Ascending aorta (tissue), 2 donors: ENCODE measurements at regions of chr1 and their contacts with region 1.

Region 1: GRCh38 chr1:47515164-47515789 is 77.4 kb downstream of the FOXD2 start:
- DNase-seq: no peak
- H3K4me3 ChIP-seq: no peak overlapping the region
- H3K27ac ChIP-seq: peak overlapping the region in 1 of 2 donors; percentile 17
- H3K4me1 ChIP-seq: no peaks in the 10 kb centered on the region
- H3K27me3 ChIP-seq: no peaks in the 10 kb centered on the region
- CTCF ChIP-seq: no peak

Region 2: GRCh38 chr1:46903481-46903880 is 611.8 kb before region 1 on chr1:
- intact Hi-C with region 1: no loop called
- DNase-seq: no peak
- H3K4me3 ChIP-seq: no peak overlapping the region
- H3K27ac ChIP-seq: no peak overlapping the region
- H3K4me1 ChIP-seq: no peaks in the 10 kb centered on the region
- H3K27me3 ChIP-seq: no peaks in the 10 kb centered on the region
- CTCF ChIP-seq: no peak

Region 3: GRCh38 chr1:47569681-47570470 is 54.6 kb after region 1 on chr1:
- intact Hi-C with region 1: loop called (anchors 5 kb)
- DNase-seq: peak; percentile 31 to 89
- H3K4me3 ChIP-seq: no peak overlapping the region
- H3K27ac ChIP-seq: peak overlapping the region in 1 of 2 donors; percentile 22
- H3K4me1 ChIP-seq: peaks cover 0 to 9% of the 10 kb centered on the region in 2 donors
- H3K27me3 ChIP-seq: no peaks in the 10 kb centered on the region
- CTCF ChIP-seq: peak; percentile 45 to 69 (median 69)